Activated CD4-positive, alpha-beta T cell treated with anti-CD3 and anti-CD28 coated beads for 36 hours (primary cell): ENCODE measurements at regions of chr19 and their contacts with region 1.

Region 1: GRCh38 chr19:54137086-54137921 is at the start of gene CNOT3:
- DNase-seq: peak; percentile 99
- ATAC-seq: peak; percentile 86
- H3K4me3 Mint-ChIP-seq: peak within 1 kb of the TSS; percentile 83
- H3K27ac Mint-ChIP-seq: peak within 1 kb of the TSS; percentile 91
- H3K4me1 Mint-ChIP-seq: peaks cover 44% of the 10 kb centered on the region
- H3K27me3 Mint-ChIP-seq: no peaks in the 10 kb centered on the region
- total RNA-seq, gene CNOT3: 61.0 to 93.8 TPM

Region 2: DNA sequence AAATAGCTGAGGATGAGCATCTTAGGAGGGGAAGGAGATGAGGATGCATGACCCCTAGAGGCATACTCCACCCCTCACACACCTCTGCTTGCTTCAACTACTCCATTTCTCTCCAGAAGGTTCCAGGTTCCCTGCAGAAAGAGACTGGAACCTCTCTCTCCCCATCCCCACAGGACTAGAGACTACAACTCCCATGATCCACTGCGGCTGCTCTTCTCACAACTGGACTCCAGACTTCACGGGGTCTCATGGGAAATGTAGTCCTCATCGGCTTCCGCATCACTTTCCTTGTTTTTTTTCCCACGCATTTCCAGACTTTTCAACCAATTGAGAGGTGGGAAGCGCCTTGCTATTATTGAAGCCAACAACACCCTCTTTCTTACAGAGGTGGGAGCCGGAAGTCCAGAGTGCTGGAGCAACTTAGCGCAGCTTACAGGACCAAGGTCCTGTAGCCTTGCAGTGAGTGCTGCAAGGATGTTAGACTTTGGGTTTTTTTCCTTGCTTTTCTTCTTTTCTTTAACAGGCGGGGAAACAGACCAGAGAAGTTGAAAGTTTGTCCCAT is 159.8 kb before region 1 on chr19:
- CTCF ChIA-PET with region 1: no interaction called
- POLR2A ChIA-PET with region 1: no interaction called
- intact Hi-C with region 1: loop called in 1 of 2 experiments (anchors 1 kb)
- DNase-seq: peak; percentile 79
- ATAC-seq: peak; percentile 61
- H3K4me3 Mint-ChIP-seq: peak overlapping the region; percentile 59
- H3K27ac Mint-ChIP-seq: no peak overlapping the region
- H3K4me1 Mint-ChIP-seq: peaks cover 30% of the 10 kb centered on the region
- H3K27me3 Mint-ChIP-seq: peaks cover 53% of the 10 kb centered on the region

Region 3: GRCh38 chr19:54115109-54116063 is 21.9 kb before region 1 on chr19 and contains the starts of genes PRPF31 and TFPT:
- CTCF ChIA-PET with region 1: interaction called, 4 read pairs
- POLR2A ChIA-PET with region 1: interaction called, 32 read pairs
- intact Hi-C with region 1: loop called (anchors 1 kb)
- DNase-seq: peak; percentile 97
- ATAC-seq: peak; percentile 94
- H3K4me3 Mint-ChIP-seq: peak within 1 kb of the TSS; percentile 83
- H3K27ac Mint-ChIP-seq: peak within 1 kb of the TSS; percentile 96
- H3K4me1 Mint-ChIP-seq: peaks cover 25% of the 10 kb centered on the region
- H3K27me3 Mint-ChIP-seq: no peaks in the 10 kb centered on the region
- total RNA-seq, gene PRPF31: 85.5 to 115 TPM
- total RNA-seq, gene TFPT: 28.5 to 39.3 TPM

Region 4: DNA sequence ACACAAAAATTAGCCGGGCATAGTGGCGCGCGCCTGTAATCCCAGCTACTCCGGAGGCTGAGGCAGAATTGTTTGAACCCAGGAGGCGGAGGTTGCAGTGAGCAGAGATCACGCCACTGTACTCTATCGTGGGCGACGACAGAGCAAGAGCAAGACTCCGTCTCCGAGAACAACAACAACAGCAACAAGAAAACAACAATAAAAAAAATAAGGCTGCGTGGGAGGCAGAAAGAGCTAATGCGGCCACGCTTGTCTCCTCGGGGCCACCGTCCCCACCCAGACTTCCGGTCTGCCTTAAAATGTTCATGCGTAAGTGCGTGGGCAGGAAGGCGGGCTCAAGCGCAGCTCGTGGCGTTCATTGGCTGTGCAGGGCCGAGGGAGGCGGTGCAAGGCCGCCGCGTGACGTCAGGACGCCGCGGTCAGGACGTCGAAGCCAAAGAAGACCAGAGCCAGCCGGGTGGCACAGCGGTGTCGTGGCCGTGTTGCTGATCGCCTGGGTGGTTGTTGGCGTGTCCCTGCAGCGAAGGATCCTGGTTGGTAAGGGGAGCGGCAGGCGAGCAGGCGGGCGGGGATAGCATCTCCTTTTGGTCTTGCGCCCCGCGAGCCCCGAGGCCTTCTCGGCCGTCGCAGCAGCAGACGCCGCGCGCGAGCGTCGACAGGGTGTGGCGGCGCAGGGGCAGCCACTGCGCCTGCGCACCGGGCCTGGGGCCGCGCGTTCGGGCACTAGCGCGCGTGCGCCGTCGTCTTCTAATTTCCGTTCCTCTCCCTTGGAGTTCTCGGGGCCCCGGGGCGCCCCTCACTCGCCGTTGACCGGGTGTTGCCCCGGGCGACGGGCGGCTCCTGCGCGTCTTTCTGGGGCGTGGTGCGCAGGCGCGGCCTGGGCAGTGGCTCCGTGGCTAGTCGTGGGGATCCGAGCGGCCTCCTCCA is 311.7 kb after region 1 on chr19 and contains the start of gene LENG8:
- CTCF ChIA-PET with region 1: no interaction called
- POLR2A ChIA-PET with region 1: no interaction called
- intact Hi-C with region 1: loop called (anchors 1 kb)
- DNase-seq: peak; percentile 98
- ATAC-seq: peak; percentile 92
- H3K4me3 Mint-ChIP-seq: peak within 1 kb of the TSS; percentile 98
- H3K27ac Mint-ChIP-seq: peak within 1 kb of the TSS; percentile 98
- H3K4me1 Mint-ChIP-seq: peaks cover 36% of the 10 kb centered on the region
- H3K27me3 Mint-ChIP-seq: no peaks in the 10 kb centered on the region
- total RNA-seq, gene LENG8: 156 to 221 TPM